ENCODE measurements at regions of chr6 and their contacts with region 1.

Region 1: DNA sequence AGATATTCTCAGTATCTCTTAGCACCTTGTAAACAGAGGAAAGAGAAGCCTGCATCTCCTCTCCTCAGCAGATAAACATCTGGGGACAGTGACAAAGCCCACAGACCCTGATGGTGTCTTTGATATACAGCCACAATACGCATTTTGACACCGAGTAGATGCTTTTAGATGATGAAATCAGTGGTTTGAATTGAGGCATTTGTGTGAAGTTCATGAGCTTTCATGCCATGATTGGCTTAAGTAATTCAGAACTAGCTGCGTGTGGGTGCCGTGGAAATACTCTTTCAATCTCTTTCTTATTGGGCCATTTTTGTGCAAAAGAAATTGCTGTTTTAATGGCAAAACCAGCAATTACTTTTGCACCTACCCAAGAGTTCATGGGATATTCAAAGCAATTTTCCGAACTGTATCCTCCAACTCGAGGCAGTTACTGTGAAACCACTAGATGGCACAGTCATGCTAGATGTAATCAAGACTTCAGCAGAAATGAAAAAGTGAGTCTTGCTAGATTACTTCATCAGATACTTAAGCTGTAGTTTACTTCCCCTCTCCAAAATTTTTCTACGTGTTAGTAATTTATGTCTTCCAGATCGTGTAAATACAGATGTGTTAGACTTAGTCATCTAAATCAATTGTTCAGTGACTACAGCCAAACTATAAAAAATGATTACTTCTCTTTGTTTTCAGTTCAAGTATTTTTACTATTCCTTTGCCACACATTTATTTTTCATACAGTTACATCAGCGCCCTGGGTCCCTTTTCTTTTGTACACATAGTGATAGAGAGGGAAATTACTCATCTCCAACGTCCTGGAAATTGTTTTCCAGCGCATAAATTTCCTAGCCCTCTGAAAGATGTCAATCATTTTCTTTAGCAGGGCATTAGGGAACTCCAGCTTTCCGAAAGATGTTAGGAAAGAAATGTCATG is 49.4 kb downstream of the IYD start:
- DNase-seq: peak; percentile 84
- H3K4me3 Mint-ChIP-seq: peak overlapping the region; percentile 50
- H3K27ac Mint-ChIP-seq: peak overlapping the region; percentile 85
- H3K4me1 Mint-ChIP-seq: peaks cover 21% of the 10 kb centered on the region
- H3K27me3 Mint-ChIP-seq: no peaks in the 10 kb centered on the region
- CTCF ChIP-seq: peak; percentile 73

Region 2: GRCh38 chr6:150430815-150431214 is 12.7 kb after region 1 on chr6:
- CTCF ChIA-PET with region 1: interaction called, 16 read pairs
- POLR2A ChIA-PET with region 1: no interaction called
- intact Hi-C with region 1: no loop called
- DNase-seq: no peak
- H3K4me3 Mint-ChIP-seq: no peak overlapping the region
- H3K27ac Mint-ChIP-seq: no peak overlapping the region
- H3K4me1 Mint-ChIP-seq: no peaks in the 10 kb centered on the region
- H3K27me3 Mint-ChIP-seq: no peaks in the 10 kb centered on the region
- CTCF ChIP-seq: no peak

Region 3: DNA sequence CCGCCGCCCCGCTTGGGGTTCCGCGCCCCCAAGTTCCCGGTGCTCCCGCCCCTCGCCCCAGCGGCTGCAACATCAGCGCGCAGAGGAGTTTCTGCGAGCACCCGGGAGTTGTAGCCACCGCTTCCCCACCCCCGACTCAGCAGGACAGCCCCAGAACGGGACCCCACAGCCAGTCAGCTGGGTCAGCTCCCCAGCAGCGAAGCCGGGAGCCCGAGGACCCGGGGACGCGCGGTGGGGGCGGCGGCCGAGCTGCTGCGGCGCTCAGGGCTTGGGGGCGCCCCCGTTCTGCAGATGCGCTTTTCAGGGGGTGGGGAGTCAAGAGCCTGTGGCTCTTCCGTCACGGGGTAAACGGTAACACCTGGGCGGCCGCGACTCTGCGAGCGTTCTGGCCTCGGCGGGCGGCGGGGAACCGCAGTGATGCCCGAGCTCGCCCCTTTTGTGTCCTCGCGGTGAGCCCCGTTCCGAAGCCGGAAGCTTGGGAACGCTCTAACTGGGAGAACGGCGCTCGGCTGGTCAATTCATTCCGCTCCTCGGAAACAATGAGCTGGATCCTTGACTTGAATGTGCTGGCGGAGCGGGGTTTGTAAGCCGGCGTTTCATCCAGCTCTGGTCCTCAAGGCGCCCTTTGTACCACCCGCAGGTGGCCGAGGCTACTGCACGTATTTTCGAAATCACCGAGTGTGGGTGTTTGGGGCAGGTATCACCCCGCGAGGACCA is 182.3 kb after region 1 on chr6:
- CTCF ChIA-PET with region 1: interaction called, 21 read pairs
- POLR2A ChIA-PET with region 1: interaction called, 32 read pairs
- intact Hi-C with region 1: loop called (anchors 1 kb)
- DNase-seq: peak; percentile 80
- H3K4me3 Mint-ChIP-seq: peak overlapping the region; percentile 85
- H3K27ac Mint-ChIP-seq: no peak overlapping the region
- H3K4me1 Mint-ChIP-seq: no peaks in the 10 kb centered on the region
- H3K27me3 Mint-ChIP-seq: no peaks in the 10 kb centered on the region
- CTCF ChIP-seq: peak; percentile 49

Region 4: DNA sequence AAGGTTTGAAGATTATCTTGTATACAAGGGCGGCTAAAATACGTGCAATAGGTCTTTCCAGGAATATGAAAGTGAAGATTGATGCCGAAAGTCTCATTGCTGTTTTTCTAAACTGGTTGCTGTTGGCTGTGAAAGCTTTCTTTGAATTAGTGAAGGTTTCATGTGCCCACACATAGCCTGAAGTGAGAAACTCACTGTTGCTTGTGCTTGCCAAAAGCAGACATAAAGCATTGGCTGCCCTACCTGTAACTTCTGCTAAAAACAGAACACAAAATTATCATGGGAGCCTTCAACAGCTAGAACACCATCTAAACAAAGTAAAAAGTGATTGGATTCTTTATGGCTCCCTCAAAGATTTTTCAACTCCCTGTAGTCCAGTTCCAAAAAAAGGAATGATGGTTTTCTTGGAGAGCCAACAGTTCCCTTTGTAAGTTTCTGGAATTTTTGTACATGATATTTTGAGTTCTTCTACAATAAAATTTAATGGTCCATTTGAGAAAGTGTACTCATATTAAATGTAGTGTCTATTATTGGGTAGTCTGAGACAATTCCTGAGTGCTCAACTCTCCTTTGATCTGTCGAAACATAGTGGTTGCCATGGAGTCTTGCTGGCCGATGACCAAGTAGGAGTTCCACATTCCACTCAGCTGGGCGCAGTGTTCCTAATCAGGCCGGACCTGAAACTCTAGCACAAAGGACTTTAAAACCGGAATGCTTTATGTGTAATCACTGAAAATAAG is 250.0 kb after region 1 on chr6:
- CTCF ChIA-PET with region 1: interaction called, 4 read pairs
- POLR2A ChIA-PET with region 1: no interaction called
- intact Hi-C with region 1: loop called (anchors 1 kb)
- DNase-seq: peak; percentile 94
- H3K4me3 Mint-ChIP-seq: no peak overlapping the region
- H3K27ac Mint-ChIP-seq: peak overlapping the region; percentile 24
- H3K4me1 Mint-ChIP-seq: peaks cover 18% of the 10 kb centered on the region
- H3K27me3 Mint-ChIP-seq: no peaks in the 10 kb centered on the region
- CTCF ChIP-seq: peak; percentile 13

Region 5: DNA sequence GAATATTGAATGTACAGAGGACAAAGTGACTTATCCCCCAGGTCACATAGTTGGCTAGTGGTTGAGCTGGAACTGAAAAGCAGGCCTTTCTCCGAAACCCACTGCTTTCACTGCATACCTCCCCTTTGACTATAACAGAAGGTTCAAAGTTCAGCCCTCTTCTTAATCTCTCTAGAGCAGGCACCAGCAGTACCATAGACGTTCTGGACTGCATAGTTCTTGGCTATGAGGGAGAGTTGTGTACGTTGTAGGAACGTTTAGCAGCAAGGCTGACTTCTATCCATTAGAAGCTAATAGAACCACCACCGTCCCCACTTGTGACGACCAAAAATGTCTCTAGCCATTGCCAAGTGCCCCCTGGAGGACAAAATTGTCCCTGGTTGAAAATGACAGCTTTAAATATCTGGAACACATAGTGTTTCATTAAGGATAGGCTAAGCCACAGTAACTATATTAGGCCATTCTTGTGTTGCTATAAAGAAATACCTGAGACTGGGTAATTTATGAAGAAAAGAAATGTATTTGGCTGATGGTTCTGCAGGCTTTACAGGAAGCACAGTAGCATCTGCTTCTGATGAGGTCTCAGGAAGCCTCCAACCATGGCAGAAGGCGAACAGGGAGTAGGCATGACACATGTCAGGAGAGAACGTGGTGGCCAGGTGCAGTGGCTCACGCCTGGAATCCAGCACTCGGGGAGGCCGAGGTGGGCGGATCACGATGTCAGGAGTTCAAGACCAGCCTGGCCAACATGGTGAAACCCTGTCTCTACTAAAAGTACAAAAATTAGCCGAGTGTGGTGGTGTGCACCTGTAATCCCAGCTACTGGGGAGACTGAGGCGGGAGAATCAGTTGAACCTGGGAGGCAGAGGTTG is 323.7 kb after region 1 on chr6:
- CTCF ChIA-PET with region 1: interaction called, 4 read pairs
- POLR2A ChIA-PET with region 1: no interaction called
- intact Hi-C with region 1: loop called (anchors 1 kb)
- DNase-seq: peak; percentile 42
- H3K4me3 Mint-ChIP-seq: no peak overlapping the region
- H3K27ac Mint-ChIP-seq: no peak overlapping the region
- H3K4me1 Mint-ChIP-seq: no peaks in the 10 kb centered on the region
- H3K27me3 Mint-ChIP-seq: no peaks in the 10 kb centered on the region
- CTCF ChIP-seq: peak; percentile 28

Region 6: GRCh38 chr6:150865406-150866146 is 447.4 kb after region 1 on chr6 and contains the start of gene MTHFD1L:
- CTCF ChIA-PET with region 1: interaction called, 4 read pairs
- POLR2A ChIA-PET with region 1: no interaction called
- intact Hi-C with region 1: loop called (anchors 1 kb)
- DNase-seq: peak; percentile 83
- H3K4me3 Mint-ChIP-seq: peak within 1 kb of the TSS; percentile 98
- H3K27ac Mint-ChIP-seq: peak within 1 kb of the TSS; percentile 90
- H3K4me1 Mint-ChIP-seq: peaks cover 13% of the 10 kb centered on the region
- H3K27me3 Mint-ChIP-seq: no peaks in the 10 kb centered on the region
- CTCF ChIP-seq: peak; percentile 59
- total RNA-seq, gene MTHFD1L: 82.4 and 110 TPM in 2 replicates

Region 7: GRCh38 chr6:150874179-150874578 is 456.0 kb after region 1 on chr6:
- CTCF ChIA-PET with region 1: interaction called, 10 read pairs
- POLR2A ChIA-PET with region 1: no interaction called
- intact Hi-C with region 1: no loop called
- DNase-seq: no peak
- H3K4me3 Mint-ChIP-seq: no peak overlapping the region
- H3K27ac Mint-ChIP-seq: peak overlapping the region; percentile 31
- H3K4me1 Mint-ChIP-seq: peaks cover 9% of the 10 kb centered on the region
- H3K27me3 Mint-ChIP-seq: no peaks in the 10 kb centered on the region
- CTCF ChIP-seq: no peak